ENCODE measurements at regions of chr22 and their contacts with region 1.

Region 1: GRCh38 chr22:29154364-29155048 is 51.2 kb upstream of the EMID1 start:
- DNase-seq: peak; percentile 74
- ATAC-seq: peak; percentile 79

Region 2: DNA sequence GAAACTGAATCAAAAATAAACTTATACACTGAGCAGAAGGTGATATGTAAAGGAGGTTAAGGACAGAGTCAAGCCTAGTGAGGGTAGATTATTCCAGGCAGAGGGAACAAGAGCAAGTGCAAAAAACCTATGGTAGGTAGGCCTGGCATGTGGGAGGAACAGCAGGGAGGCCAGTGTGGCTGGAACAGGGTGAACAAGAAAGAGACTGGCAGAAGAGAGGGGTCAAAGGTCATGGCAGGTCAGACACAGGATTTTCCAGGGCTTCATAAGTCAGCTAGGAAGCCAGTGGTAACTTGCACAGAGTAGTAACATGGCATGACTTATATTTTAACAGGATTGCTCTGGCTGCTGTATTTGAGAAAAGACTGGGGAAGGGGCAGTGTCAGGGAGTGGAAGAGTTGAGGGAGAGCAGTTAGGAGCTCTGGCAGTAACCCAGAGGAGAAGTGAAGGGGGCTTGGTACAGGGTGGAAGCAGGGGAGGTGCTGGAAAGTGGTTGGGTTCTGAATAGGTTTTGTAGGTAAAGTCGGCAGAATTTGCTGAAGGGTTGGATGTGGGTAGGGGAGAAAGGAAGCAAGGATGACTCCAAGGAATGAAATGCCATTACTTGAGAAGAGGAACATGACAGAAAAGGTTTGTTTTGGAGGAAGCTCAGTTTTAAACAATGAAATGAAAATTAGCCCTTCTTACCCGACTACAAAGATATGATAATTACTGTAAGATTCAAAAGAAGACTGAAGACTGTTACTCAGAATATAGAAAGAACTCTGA is 184.9 kb before region 1 on chr22:
- intact Hi-C with region 1: no loop called
- DNase-seq: no peak
- ATAC-seq: no peak

Region 3: GRCh38 chr22:29062286-29062821 is 92.2 kb before region 1 on chr22:
- intact Hi-C with region 1: loop called in 1 of 2 experiments (anchors 10 kb)
- DNase-seq: no peak
- ATAC-seq: peak in 1 of 2 donors; percentile 47

Region 4: DNA sequence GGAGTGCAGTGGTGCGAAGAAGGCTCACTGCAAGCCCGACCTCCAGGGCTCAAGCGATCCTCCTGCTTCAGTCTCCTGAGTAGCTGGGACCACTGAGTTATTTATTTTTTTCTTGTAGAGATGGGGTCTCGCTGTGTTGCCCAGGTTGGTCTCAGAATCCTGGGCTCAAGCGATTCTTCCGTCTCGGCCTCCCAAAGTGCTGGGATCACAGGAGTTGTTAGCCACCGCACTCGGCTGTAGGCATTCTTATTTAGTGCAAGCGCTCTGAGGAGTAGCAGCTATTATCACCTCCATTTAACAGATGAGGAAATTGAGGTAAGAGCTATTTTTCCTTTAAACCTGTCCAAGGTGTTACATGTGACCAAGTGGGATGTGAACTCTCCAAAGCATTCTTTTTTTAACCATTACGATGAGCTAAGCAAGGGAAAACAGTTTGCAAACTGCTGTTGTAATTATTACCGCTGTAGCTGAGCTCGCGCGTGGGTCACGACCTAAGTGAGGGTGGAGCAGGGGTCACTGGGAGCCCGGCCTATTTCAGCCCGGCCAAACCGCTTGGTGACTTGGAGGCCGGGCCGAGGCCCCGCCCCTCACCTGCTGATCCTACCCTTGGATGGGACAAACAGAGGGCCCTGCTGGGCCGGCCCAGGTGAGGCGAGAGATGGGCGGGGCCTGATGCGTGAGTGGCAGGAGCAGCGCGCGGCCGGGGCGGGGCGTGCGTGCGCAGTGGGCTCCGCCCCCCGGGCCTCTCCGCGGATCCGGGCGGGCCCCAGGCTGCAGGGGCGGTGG is 82.1 kb before region 1 on chr22:
- intact Hi-C with region 1: loop called (anchors 2 to 10 kb)
- DNase-seq: peak; percentile 89
- ATAC-seq: peak; percentile 93 to 94

Region 5: DNA sequence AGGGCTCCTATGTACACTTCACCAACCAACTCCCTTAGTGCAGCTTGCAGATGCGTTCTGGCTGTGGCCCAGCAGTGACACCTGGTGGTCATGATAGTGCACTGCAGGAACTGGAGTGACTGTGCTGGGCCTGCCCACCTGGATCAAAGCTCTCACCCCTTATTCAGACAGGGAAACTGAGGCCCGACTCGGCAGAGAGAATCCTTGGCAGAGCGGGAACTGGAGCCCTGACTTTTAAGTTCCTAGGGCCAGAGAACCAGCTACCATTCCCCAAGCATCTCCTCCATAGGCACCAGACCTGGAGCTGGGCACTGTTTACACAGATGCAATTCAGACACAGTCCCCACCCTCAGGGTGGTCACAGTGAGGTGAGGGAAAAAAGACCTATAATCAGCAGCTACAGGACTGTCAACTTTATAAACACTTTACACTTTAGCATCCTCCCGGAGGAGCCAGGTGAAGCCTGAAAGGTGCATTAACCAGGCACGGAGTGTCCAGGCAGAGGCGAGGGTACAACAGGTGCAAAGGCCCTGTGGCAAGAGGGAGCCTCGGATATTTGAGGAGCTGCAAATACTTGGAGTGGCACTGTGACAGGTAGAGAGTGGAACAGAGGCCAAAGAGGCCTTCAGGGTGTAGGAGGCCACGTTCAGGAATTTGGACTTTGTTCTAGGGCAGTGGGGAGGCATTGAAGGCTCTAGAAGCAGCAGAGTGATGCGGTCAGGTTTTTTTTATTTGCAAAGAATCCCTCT is 91.3 kb after region 1 on chr22:
- intact Hi-C with region 1: loop called in 1 of 2 experiments (anchors 5 kb)
- DNase-seq: peak; percentile 70
- ATAC-seq: peak; percentile 93 to 94

Region 6: DNA sequence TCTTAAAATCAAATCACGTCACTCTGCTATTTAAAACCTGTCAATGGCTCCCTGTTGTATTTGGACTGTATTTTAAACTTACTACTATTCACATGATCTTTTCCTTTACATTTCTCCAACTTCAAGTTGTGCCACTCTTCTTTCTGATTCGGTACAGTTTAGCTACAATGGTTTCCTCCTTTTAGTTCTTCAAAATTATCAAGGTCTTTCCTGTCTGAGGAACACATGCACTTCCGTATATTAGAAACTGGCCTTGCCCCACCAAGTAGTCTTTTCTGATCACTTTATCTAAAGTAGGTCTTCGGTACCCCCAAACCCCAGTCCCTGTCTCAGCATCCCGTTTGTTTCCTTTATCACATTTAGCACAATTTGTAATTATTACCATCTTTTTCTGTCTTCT is 810.3 kb after region 1 on chr22:
- intact Hi-C with region 1: no loop called
- DNase-seq: no peak
- ATAC-seq: no peak

Measured in left cardiac atrium (tissue), 4 donors.